Transverse colon (tissue), 4 donors: ENCODE measurements at regions of chr4 and their contacts with region 1.

Region 1: DNA sequence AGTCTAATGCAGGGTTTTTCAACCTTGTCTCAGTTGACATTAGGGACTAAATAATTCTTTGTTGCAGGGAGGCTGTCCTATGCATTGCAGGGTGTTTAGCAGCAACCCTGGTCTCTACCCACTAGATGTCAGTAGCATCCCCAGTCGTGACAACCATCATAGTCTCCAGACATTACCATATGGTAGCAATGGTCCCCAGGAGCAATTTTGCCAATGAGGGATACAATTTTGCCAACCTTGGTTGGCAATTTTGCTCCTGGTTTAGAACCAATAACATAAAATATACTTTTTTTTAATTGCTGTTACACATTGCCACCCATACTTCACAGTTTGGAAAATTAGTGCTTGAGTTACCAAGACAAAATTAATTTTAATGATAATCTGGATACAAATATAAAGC is 6.0 kb downstream of the EREG start:
- DNase-seq: peak; percentile 42
- H3K4me3 ChIP-seq: no peak overlapping the region
- H3K27ac ChIP-seq: no peak overlapping the region
- H3K4me1 ChIP-seq: peaks cover 0 to 39% (median 7%) of the 10 kb centered on the region in 4 donors
- H3K27me3 ChIP-seq: peaks cover 2% of the 10 kb centered on the region
- CTCF ChIP-seq: peak; percentile 51 to 67 (median 60)
- EP300 ChIP-seq: no peak
- POLR2A ChIP-seq: no peak

Region 2: DNA sequence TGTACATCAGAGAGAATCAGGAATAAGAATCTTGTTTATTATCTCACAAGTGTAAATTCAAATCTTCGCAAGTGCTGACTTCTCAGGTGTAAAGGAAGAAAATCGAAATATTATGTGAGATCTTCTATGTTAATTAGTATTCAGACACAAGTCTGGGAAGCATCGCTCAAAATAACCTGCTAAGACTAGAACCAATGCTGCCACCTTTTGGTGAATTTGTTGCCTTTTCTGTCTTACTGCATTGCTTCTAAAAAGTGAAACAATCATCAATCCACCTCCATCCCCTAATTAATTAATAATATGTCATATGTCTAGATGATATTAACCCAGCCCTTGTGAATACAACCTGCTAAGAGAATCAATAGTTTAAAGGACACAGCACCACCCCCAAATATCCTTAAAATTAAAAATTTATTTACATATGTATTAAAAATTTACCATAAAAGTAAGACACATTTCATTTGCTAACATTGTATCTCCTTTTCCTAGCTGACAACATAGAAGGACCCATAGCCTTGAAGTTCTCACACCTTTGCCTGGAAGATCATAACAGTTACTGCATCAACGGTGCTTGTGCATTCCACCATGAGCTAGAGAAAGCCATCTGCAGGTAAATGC is 59.1 kb before region 1 on chr4:
- in situ Hi-C with region 1: no loop called
- intact Hi-C with region 1: no loop called
- DNase-seq: no peak
- H3K4me3 ChIP-seq: no peak overlapping the region
- H3K27ac ChIP-seq: no peak overlapping the region
- H3K4me1 ChIP-seq: no peaks in the 10 kb centered on the region
- H3K27me3 ChIP-seq: no peaks in the 10 kb centered on the region
- CTCF ChIP-seq: peak; percentile 20 to 55 (median 45)
- EP300 ChIP-seq: no peak
- POLR2A ChIP-seq: no peak

Region 3: DNA sequence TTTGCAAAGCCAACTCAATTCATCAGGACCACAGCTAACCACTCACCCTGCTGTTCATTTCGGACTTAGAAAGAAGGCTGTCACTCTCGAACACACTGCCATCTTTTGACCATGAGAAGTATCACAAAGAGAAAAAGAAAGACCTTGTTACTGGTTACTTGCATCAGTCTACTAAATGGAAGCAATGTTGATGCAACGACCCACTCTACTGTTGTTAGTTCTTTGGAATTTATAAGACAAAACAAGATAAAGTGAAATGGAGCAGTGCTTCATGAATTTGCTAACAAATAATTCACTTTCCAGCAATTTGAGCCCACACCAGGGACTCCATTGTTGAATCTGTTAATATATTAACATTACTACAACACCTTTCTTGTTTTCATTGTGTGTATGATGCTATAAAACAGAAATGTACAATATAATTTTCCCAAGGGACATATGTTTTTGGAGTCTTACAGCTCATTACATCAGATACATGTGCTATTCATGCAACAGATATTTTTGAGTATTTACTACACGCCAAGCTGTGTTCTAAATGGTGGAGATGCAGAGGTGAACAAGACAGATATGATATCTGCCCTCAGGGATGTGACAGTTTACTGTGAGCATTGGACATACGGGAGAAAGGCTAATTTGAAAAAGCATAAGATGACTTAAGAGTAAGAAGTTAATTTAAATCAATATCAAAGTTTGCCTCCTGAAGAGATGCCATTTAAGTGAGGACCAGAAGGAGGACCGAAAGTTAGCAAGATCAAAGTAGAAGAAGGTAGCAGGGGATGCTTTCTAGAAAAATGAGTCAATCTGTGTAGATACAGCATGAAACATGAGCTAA is 161.3 kb after region 1 on chr4:
- in situ Hi-C with region 1: loop called in 1 of 4 experiments (anchors 10 kb)
- intact Hi-C with region 1: no loop called
- DNase-seq: no peak
- H3K4me3 ChIP-seq: no peak overlapping the region
- H3K27ac ChIP-seq: no peak overlapping the region
- H3K4me1 ChIP-seq: peaks cover 0 to 38% (median 0%) of the 10 kb centered on the region in 4 donors
- H3K27me3 ChIP-seq: no peaks in the 10 kb centered on the region
- CTCF ChIP-seq: peak; percentile 24 to 69 (median 45)
- EP300 ChIP-seq: no peak
- POLR2A ChIP-seq: no peak

Region 4: GRCh38 chr4:74659576-74660411 is 288.9 kb after region 1 on chr4:
- in situ Hi-C with region 1: loop called in 1 of 4 experiments (anchors 10 kb)
- intact Hi-C with region 1: no loop called
- DNase-seq: peak; percentile 17
- H3K4me3 ChIP-seq: no peak overlapping the region
- H3K27ac ChIP-seq: peak overlapping the region; percentile 53 to 75 (median 61)
- H3K4me1 ChIP-seq: peaks cover 0 to 21% (median 6%) of the 10 kb centered on the region in 4 donors
- H3K27me3 ChIP-seq: no peaks in the 10 kb centered on the region
- CTCF ChIP-seq: no peak
- EP300 ChIP-seq: no peak
- POLR2A ChIP-seq: no peak